Activated CD4-positive, alpha-beta memory T cell treated with anti-CD3 and anti-CD28 coated beads for 36 hours (primary cell): ENCODE measurements at regions of chr22 and their contacts with region 1.

Region 1: GRCh38 chr22:35648066-35649025 is at the start of gene APOL6:
- DNase-seq: peak; percentile 79
- H3K4me3 Mint-ChIP-seq: peak within 1 kb of the TSS; percentile 99
- H3K27ac Mint-ChIP-seq: peak within 1 kb of the TSS; percentile 100
- H3K4me1 Mint-ChIP-seq: peaks cover 42% of the 10 kb centered on the region
- H3K27me3 Mint-ChIP-seq: no peaks in the 10 kb centered on the region
- total RNA-seq, gene APOL6: 26.7 to 27.7 TPM

Region 2: DNA sequence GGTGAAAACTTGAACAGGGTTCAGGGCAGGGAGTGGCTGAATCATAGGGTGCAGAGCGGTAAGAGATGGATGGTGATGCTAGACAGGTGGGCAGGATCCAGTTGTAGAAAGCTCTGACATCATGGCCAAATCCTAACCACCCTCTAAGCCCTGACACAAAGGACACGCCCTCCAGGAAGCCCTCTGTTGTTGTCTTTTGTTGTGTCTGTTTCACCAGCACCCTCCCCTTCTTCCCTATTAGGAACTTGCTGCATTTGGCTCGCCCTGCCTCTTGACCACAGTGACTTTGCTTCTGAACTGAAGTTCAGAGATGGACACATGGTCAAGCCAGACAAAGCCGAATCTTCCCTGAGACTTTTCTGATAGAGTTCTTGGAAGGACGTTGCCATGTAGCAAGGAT is 14.3 kb before region 1 on chr22:
- CTCF ChIA-PET with region 1: interaction called, 8 read pairs
- POLR2A ChIA-PET with region 1: interaction called, 7 read pairs
- intact Hi-C with region 1: loop called (anchors 2 kb)
- DNase-seq: no peak
- H3K4me3 Mint-ChIP-seq: no peak overlapping the region
- H3K27ac Mint-ChIP-seq: no peak overlapping the region
- H3K4me1 Mint-ChIP-seq: peaks cover 23% of the 10 kb centered on the region
- H3K27me3 Mint-ChIP-seq: peaks cover 2% of the 10 kb centered on the region

Region 3: DNA sequence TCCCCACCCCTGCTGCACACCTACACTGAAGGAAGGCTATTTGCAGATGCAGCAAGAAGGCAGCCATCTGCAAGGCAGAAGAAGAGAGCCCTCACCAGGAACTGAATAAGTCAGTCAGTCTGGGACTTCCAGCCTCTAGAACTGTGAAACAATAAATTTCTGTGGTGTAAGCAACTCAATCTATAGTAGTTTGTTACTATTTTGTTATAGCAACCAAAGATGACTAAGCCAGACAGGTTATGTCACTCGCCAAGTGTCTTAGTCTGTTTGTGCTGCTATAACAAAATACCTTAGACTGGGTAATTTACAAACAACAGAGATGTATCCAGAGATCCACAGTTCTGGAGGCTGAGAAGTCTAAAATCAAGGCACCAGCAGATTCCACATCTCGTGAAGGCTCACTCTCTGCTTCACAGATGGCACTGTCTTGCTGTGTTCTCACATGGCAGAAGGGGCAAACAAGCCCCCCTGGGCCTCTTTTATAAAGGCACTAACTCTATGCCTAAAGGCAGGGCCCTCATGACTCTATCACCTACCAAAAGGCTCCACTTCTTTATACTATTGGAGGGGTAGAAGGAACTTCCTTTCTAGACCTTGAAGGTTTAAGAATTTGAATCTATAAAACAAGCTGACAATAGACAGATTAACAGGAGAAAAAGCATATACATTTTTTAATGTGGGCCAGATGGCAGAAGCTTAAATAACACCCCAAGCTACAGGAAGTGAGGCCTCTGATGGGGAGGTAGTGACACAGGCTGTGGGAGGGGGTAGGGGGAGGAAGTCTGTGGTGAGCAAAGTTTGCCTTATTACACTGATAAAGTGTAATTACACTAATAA is 12.2 kb after region 1 on chr22:
- CTCF ChIA-PET with region 1: interaction called, 7 read pairs
- POLR2A ChIA-PET with region 1: interaction called, 38 read pairs
- intact Hi-C with region 1: loop called (anchors 1 kb)
- DNase-seq: peak; percentile 72
- H3K4me3 Mint-ChIP-seq: peak overlapping the region; percentile 43
- H3K27ac Mint-ChIP-seq: peak overlapping the region; percentile 86
- H3K4me1 Mint-ChIP-seq: peaks cover 77% of the 10 kb centered on the region
- H3K27me3 Mint-ChIP-seq: no peaks in the 10 kb centered on the region

Region 4: DNA sequence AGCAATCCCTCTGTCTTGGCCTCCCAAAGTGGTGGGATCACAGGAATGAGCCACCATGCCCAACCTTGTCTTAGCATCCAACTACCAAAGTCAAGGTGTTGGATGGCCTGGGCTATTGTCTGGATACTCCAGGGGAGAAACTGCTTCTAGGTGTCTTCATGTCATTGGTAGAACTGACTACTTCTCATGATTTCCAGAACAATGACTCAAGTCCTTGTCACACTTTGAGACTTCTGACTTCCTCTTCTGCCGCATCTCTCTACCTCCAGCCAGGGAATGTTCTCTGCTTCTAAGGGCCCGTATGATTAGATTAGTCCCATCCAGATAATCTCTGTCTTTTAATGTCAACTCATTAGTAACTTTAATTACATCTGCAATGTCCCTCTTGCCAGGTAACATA is 30.5 kb after region 1 on chr22:
- CTCF ChIA-PET with region 1: interaction called, 3 read pairs
- POLR2A ChIA-PET with region 1: interaction called, 11 read pairs
- intact Hi-C with region 1: loop called (anchors 1 kb)
- DNase-seq: no peak
- H3K4me3 Mint-ChIP-seq: no peak overlapping the region
- H3K27ac Mint-ChIP-seq: peak overlapping the region; percentile 69
- H3K4me1 Mint-ChIP-seq: peaks cover 20% of the 10 kb centered on the region
- H3K27me3 Mint-ChIP-seq: no peaks in the 10 kb centered on the region

Region 5: DNA sequence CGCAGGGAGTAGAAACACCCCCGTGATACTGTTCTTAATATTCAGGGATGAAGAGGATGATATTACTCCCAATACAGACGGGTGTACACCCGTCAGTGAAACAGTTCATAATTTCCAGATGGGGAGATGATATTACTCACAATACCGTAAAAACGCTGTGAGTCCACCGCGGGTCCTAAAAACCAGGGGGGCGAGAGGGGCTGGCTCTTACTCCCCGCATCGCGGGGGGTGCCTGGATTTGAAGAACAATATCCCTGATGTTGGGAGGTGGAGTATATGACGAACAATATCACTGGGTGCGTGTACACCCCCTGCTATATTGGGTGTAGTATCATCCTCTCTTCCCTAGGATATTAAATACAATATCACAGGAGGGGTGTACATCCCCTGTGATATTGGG is 48.8 kb after region 1 on chr22:
- CTCF ChIA-PET with region 1: no interaction called
- POLR2A ChIA-PET with region 1: no interaction called
- intact Hi-C with region 1: loop called (anchors 5 kb)
- DNase-seq: peak; percentile 70
- H3K4me3 Mint-ChIP-seq: no peak overlapping the region
- H3K27ac Mint-ChIP-seq: no peak overlapping the region
- H3K4me1 Mint-ChIP-seq: no peaks in the 10 kb centered on the region
- H3K27me3 Mint-ChIP-seq: peaks cover 7% of the 10 kb centered on the region